IMR-90 (cell line): ENCODE measurements at regions of chrX and their contacts with region 1.

Region 1: GRCh38 chrX:45710081-45710801 is 509.6 kb upstream of the DIPK2B start:
- DNase-seq: peak; percentile 96
- ATAC-seq: peak; percentile 71
- H3K4me3 ChIP-seq: no peak overlapping the region
- H3K27ac ChIP-seq: peak overlapping the region; percentile 58
- H3K4me1 ChIP-seq: peaks cover 13% of the 10 kb centered on the region
- H3K27me3 ChIP-seq: no peaks in the 10 kb centered on the region
- CTCF ChIP-seq: no peak
- POLR2A ChIP-seq: no peak
- RAD21 ChIP-seq: no peak

Region 2: GRCh38 chrX:44130189-44130588 is 1580.1 kb before region 1 on chrX:
- CTCF ChIA-PET with region 1: no interaction called
- POLR2A ChIA-PET with region 1: no interaction called
- dilution Hi-C with region 1: no loop called
- in situ Hi-C with region 1: no loop called
- intact Hi-C with region 1: no loop called
- DNase-seq: no peak
- ATAC-seq: no peak
- H3K4me3 ChIP-seq: no peak overlapping the region
- H3K27ac ChIP-seq: no peak overlapping the region
- H3K4me1 ChIP-seq: no peaks in the 10 kb centered on the region
- H3K27me3 ChIP-seq: peaks cover 2% of the 10 kb centered on the region; the same call in 1 of the 2 replicates
- CTCF ChIP-seq: no peak
- POLR2A ChIP-seq: no peak
- RAD21 ChIP-seq: no peak

Region 3: DNA sequence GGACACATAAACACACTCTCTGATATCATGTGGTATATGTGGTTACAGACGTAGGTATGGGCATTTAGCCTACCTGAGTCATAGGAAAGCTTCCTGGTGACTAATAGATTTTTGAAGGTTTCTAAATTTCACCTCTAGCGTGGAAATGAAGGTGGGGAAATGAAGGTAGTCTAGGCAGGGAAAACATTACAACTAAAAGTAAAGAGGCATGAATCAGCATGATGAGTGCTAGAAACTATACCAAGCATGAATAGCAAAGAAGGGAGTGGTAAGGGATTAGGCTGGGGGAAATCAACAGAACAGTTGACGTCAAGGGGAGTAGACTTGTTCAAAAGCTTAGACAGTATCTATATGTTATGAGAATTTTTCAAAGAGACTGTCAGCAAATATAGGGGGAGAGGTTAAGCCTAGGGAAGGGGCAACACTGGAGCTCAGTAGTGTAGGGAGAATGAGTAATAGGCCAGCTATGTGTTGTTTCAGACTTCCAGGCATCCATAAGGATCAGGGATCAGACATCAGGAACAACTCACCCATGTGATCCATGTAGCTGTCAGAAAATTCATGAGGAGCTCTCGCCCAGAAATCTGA is 230.3 kb before region 1 on chrX:
- CTCF ChIA-PET with region 1: no interaction called
- POLR2A ChIA-PET with region 1: no interaction called
- dilution Hi-C with region 1: no loop called
- in situ Hi-C with region 1: no loop called
- intact Hi-C with region 1: loop called (anchors 1 kb)
- DNase-seq: peak; percentile 91
- ATAC-seq: peak; percentile 78
- H3K4me3 ChIP-seq: no peak overlapping the region
- H3K27ac ChIP-seq: peak overlapping the region; percentile 89
- H3K4me1 ChIP-seq: peaks cover 4% of the 10 kb centered on the region; the same call in 1 of the 2 replicates
- H3K27me3 ChIP-seq: no peaks in the 10 kb centered on the region; the same call in 1 of the 2 replicates
- CTCF ChIP-seq: no peak
- POLR2A ChIP-seq: no peak
- RAD21 ChIP-seq: no peak

Region 4: DNA sequence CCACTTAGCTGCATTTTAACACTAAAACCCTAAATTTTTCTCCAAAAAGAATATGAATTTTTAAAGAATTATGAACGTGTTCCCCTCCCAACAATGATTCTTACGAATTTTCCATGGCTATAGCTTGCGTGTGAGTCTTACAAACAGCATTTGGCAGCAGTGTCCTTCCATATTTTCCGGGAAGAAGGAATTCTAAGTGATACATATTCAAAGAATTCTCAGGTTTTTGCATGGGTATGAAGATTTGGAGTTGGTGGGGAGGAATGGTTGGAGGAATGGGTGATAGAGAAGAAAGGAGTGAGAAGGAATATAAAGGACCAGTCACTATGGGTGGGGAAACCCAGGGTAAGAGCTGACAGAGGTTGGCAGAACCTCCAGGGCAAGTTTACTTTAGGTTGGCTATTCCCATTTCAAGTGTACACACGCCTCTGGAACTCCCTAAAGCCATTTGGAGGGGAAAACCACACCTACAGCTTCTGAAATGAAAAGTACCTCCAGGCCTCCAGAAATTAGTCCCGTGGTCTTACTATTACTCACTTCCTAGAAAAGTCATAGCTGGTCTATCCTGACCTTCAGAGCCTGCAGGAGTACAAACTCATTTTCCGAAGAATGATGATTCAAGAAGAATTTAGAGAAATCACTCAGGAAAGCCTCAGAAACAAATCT is 88.7 kb before region 1 on chrX:
- CTCF ChIA-PET with region 1: no interaction called
- POLR2A ChIA-PET with region 1: no interaction called
- dilution Hi-C with region 1: no loop called
- in situ Hi-C with region 1: no loop called
- intact Hi-C with region 1: loop called (anchors 1 kb)
- DNase-seq: peak; percentile 80
- ATAC-seq: peak; percentile 16; the same call in 1 of the 2 replicates
- H3K4me3 ChIP-seq: no peak overlapping the region
- H3K27ac ChIP-seq: peak overlapping the region; percentile 78
- H3K4me1 ChIP-seq: peaks cover 2% of the 10 kb centered on the region; the same call in 1 of the 2 replicates
- H3K27me3 ChIP-seq: no peaks in the 10 kb centered on the region
- CTCF ChIP-seq: no peak
- POLR2A ChIP-seq: no peak
- RAD21 ChIP-seq: no peak

Region 5: DNA sequence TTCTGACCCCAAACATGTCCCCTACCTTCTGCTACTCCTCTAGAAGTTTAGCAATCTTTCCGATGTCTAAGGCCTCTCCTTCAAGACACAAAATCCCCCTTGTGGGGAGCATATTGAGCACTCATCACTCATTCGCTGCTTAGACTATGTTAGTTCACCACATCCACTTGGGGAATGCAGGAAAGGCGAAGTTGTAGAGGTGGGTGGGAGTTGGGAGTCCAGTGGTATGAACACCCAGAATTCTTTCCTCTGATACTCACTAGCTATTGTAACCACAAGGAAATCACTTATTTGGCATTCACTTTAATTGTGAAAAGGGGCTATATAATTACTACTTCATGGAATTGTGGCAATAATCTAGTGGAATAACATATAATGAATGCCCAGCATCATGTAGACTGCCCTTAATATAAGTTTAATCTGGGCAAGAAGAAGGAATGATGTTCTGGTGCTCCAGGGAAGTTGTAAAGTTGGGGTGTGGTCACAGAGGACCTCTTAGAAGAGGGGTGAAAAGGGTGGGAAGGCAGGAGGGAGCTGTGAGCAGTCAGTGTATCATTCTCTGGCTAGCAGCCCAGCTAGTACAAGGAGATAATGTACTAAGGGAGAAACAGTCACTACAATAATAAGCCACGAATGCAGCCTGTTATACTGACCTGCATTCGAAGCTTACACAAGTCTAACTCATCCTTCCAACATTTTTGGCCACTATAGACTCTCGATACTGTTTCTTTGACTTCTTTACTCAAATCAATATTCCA is 41.4 kb before region 1 on chrX:
- CTCF ChIA-PET with region 1: interaction called, 3 read pairs
- POLR2A ChIA-PET with region 1: no interaction called
- dilution Hi-C with region 1: no loop called
- in situ Hi-C with region 1: no loop called
- intact Hi-C with region 1: loop called (anchors 2 kb)
- DNase-seq: peak; percentile 95
- ATAC-seq: peak; percentile 85
- H3K4me3 ChIP-seq: no peak overlapping the region
- H3K27ac ChIP-seq: no peak overlapping the region; the same call in 1 of the 2 replicates
- H3K4me1 ChIP-seq: no peaks in the 10 kb centered on the region; the same call in 1 of the 2 replicates
- H3K27me3 ChIP-seq: no peaks in the 10 kb centered on the region; the same call in 1 of the 2 replicates
- CTCF ChIP-seq: no peak
- POLR2A ChIP-seq: no peak
- RAD21 ChIP-seq: no peak; the same call in none of the 2 replicates